MCF 10A (cell line): ENCODE measurements at regions of chr3 and their contacts with region 1.

Region 1: GRCh38 chr3:98013411-98014267 is 21.5 kb downstream of the GABRR3 start:
- DNase-seq: peak; percentile 21
- H3K4me3 Mint-ChIP-seq: no peak overlapping the region
- H3K27ac Mint-ChIP-seq: no peak overlapping the region
- H3K4me1 Mint-ChIP-seq: peaks cover 11% of the 10 kb centered on the region
- H3K27me3 Mint-ChIP-seq: no peaks in the 10 kb centered on the region
- CTCF ChIP-seq: no peak

Region 2: GRCh38 chr3:97895216-97895615 is 118.4 kb before region 1 on chr3:
- CTCF ChIA-PET with region 1: no interaction called
- POLR2A ChIA-PET with region 1: no interaction called
- intact Hi-C with region 1: no loop called
- DNase-seq: no peak
- H3K4me3 Mint-ChIP-seq: no peak overlapping the region
- H3K27ac Mint-ChIP-seq: no peak overlapping the region
- H3K4me1 Mint-ChIP-seq: no peaks in the 10 kb centered on the region
- H3K27me3 Mint-ChIP-seq: no peaks in the 10 kb centered on the region
- CTCF ChIP-seq: no peak

Region 3: GRCh38 chr3:97971677-97972567 is 41.7 kb before region 1 on chr3 and contains the start of gene RIOX2:
- CTCF ChIA-PET with region 1: interaction called, 3 read pairs
- POLR2A ChIA-PET with region 1: interaction called, 21 read pairs
- intact Hi-C with region 1: no loop called
- DNase-seq: peak; percentile 69
- H3K4me3 Mint-ChIP-seq: peak within 1 kb of the TSS; percentile 77
- H3K27ac Mint-ChIP-seq: peak within 1 kb of the TSS; percentile 25
- H3K4me1 Mint-ChIP-seq: peaks cover 25% of the 10 kb centered on the region
- H3K27me3 Mint-ChIP-seq: no peaks in the 10 kb centered on the region
- CTCF ChIP-seq: no peak
- total RNA-seq, gene RIOX2: 51.8 and 73.9 TPM in 2 replicates

Region 4: DNA sequence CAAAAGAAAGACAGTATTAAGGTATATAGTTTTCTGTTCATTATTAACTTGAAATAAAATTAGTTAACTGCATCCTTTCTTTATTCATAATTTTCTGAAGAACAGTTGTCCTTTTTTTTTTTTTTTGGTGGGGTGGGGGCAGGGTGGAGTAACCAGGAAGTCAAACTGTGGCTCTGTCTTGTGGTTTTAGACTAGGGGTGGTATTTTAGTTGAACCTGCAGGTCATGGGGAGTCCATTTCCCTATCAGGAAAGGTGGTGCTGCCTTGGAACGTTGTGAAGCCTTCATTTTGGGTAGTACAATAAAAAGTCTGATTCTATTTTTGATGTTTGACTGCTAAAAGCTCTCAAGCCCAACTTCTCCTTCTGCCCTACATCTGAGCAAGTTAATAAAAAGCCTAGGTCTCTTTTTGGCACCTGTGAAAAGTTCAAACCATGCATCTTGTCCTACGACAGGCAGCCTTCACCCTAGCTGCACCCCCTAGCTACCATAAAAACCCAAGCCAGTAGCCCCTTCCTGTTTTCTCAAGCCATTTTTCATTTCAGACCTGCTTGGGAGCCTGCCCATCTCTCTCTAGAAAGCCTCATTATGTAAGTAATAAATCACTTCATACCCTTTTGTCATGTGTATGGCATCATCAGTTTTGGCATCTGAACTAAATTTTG is 10.2 kb before region 1 on chr3:
- CTCF ChIA-PET with region 1: interaction called, 13 read pairs
- POLR2A ChIA-PET with region 1: no interaction called
- intact Hi-C with region 1: no loop called
- DNase-seq: no peak
- H3K4me3 Mint-ChIP-seq: no peak overlapping the region
- H3K27ac Mint-ChIP-seq: no peak overlapping the region
- H3K4me1 Mint-ChIP-seq: no peaks in the 10 kb centered on the region
- H3K27me3 Mint-ChIP-seq: peaks cover 12% of the 10 kb centered on the region
- CTCF ChIP-seq: no peak

Region 5: GRCh38 chr3:98750276-98750919 is 736.8 kb after region 1 on chr3:
- CTCF ChIA-PET with region 1: no interaction called
- POLR2A ChIA-PET with region 1: no interaction called
- intact Hi-C with region 1: no loop called
- DNase-seq: no peak
- H3K4me3 Mint-ChIP-seq: no peak overlapping the region
- H3K27ac Mint-ChIP-seq: no peak overlapping the region
- H3K4me1 Mint-ChIP-seq: peaks cover 5% of the 10 kb centered on the region
- H3K27me3 Mint-ChIP-seq: no peaks in the 10 kb centered on the region
- CTCF ChIP-seq: no peak